Common myeloid progenitor, CD34-positive (primary cell): ENCODE measurements at regions of chr21 and their contacts with region 1.

Region 1: GRCh38 chr21:43975495-43975993 is 36.6 kb upstream of the TRAPPC10 start:
- DNase-seq: peak; percentile 74 to 84 (median 83)
- H3K4me3 ChIP-seq: no peak overlapping the region
- H3K27ac ChIP-seq: no peak overlapping the region
- H3K4me1 ChIP-seq: peaks cover 0 to 3% (median 0%) of the 10 kb centered on the region in 4 experiments
- H3K27me3 ChIP-seq: no peaks in the 10 kb centered on the region

Region 2: DNA sequence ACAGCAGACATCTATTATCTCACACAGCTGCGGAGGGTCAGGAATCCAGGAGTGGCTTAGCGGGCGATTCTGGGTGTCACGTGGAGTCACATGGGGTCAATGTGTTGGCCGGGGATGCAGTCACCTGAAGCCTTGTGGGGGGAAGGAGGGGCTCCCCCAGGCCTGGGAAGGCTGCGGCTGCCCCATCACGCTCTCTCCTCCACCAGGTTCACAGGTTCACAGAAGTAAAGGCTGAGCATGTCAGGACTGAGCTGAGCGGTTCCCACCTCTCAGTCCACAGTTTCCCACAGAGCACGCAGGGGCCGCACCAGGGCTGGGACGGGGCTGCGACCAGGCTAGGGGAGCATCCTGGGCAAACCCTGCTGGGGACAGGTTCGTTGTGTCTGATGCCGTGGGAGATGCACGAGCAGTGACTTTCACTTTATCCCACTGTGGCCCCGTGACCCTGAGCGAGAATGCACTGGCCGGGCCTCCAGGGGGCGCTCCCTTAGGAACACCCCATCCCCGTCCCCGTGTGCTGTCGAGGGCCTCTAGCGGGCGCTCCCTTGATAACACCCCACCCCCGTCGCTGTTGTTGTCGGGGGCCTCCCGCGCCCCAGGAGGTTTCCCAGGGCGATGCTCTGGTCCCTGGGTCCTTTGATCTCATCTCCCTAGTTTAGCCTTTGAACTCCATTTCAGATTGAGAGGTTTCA is 36.6 kb before region 1 on chr21:
- CTCF ChIA-PET with region 1: interaction called, 13 read pairs
- POLR2A ChIA-PET with region 1: no interaction called
- DNase-seq: peak; percentile 88 to 93 (median 93)
- H3K4me3 ChIP-seq: peak overlapping the region; percentile 29 to 83 (median 64)
- H3K27ac ChIP-seq: no peak overlapping the region
- H3K4me1 ChIP-seq: peaks cover 0 to 14% (median 10%) of the 10 kb centered on the region in 4 experiments
- H3K27me3 ChIP-seq: no peaks in the 10 kb centered on the region

Region 3: GRCh38 chr21:44039828-44040227 is 64.3 kb after region 1 on chr21:
- CTCF ChIA-PET with region 1: no interaction called
- POLR2A ChIA-PET with region 1: no interaction called
- DNase-seq: no peak
- H3K4me3 ChIP-seq: no peak overlapping the region
- H3K27ac ChIP-seq: no peak overlapping the region
- H3K4me1 ChIP-seq: no peaks in the 10 kb centered on the region
- H3K27me3 ChIP-seq: no peaks in the 10 kb centered on the region